ENCODE measurements at regions of chr10 and their contacts with region 1.

Region 1: GRCh38 chr10:68208424-68209042 is 23.4 kb downstream of the ATOH7 start:
- H3K4me3 ChIP-seq: no peak overlapping the region
- H3K27ac ChIP-seq: no peak overlapping the region
- H3K4me1 ChIP-seq: no peaks in the 10 kb centered on the region
- CTCF ChIP-seq: peak; percentile 95

Region 2: DNA sequence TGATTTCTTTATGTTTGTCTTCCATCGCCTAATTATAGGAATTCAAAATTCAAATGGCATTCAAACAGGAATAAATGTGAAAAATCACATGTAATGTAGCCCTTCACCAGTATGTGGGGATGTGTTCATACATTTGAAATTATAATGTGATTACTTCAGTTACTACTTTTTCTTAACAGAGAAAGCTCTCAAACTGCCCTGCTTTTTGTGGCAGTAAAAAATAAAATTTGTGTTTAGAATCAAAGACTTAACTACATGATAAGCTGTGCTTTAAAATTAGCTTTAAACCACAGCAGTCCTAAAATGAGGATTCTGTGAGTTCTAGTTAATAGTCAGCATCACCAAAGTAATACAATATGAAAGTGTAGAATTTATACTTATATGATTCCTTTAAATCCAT is 125.7 kb before region 1 on chr10:
- CTCF ChIA-PET with region 1: interaction called, 12 read pairs
- POLR2A ChIA-PET with region 1: no interaction called
- H3K4me3 ChIP-seq: no peak overlapping the region
- H3K27ac ChIP-seq: no peak overlapping the region
- H3K4me1 ChIP-seq: no peaks in the 10 kb centered on the region
- CTCF ChIP-seq: no peak

Region 3: GRCh38 chr10:68105820-68106219 is 102.7 kb before region 1 on chr10:
- CTCF ChIA-PET with region 1: no interaction called
- POLR2A ChIA-PET with region 1: no interaction called
- H3K4me3 ChIP-seq: no peak overlapping the region
- H3K27ac ChIP-seq: no peak overlapping the region
- H3K4me1 ChIP-seq: peaks cover 18% of the 10 kb centered on the region
- CTCF ChIP-seq: no peak

Region 4: DNA sequence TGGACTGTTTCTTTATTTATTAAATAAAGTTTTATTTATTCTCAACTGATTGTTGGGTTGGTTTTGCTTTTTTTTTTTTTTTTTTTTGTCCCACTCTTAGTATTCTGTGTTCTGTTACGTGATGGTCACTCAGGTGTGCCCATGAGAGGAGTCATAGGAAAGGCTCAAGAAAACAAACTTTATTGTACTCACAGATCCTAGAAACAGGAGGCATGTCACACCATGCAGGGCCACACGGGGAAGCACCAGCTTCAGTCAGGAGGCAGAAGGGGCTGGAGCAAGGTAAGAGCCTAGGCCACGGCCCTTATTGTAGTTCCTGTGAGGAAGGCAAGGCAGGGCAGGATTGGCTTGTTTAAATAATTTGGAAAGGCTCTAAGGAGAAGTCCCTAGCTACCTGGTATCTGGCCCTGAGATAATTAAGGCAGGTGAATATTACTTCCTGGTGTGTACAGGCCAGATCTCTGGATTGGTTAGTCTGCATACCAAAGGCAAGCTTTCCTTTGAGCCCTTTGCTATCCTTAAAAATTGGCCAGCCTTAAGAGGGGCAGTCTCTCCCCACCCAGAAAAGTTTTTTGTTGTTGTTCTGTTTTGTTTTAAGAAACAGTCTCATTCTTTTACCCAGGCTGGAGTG is 15.1 kb after region 1 on chr10:
- CTCF ChIA-PET with region 1: interaction called, 30 read pairs
- POLR2A ChIA-PET with region 1: no interaction called
- H3K4me3 ChIP-seq: no peak overlapping the region
- H3K27ac ChIP-seq: no peak overlapping the region
- H3K4me1 ChIP-seq: no peaks in the 10 kb centered on the region
- CTCF ChIP-seq: no peak

Region 5: DNA sequence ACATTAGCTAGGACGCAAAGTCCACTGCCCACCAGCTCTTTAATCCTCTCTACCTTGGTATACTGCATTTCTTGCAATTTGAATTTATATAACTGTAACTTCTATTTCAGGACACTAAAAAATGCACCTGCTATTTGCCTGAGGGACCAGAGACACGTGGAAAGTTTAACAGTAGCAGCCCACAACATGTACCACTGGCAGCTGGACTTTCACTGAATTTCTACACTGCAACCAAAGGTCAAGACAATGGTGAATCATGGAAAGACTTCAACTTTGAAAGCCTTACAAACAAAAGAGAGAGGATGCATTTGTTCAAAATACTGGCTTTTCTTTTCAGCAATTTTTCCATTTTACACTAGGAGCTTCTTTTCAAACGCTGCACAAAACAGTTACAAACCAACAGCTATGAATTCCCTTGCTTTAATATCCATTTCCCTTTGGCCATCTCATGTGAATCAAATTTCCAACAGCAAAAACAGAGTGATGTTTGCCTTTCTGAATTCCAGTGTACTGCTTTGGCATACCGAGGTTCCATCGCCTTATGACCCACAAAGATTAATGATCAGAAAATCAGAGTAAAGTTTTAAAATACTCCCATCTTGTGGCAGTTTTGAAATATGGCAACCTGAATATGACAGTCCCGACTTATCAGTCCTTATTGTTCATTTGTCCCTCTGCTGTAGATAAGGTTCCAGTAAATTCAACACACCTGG is 93.4 kb after region 1 on chr10:
- CTCF ChIA-PET with region 1: interaction called, 73 read pairs
- POLR2A ChIA-PET with region 1: no interaction called
- H3K4me3 ChIP-seq: no peak overlapping the region
- H3K27ac ChIP-seq: no peak overlapping the region
- H3K4me1 ChIP-seq: no peaks in the 10 kb centered on the region
- CTCF ChIP-seq: no peak

Region 6: DNA sequence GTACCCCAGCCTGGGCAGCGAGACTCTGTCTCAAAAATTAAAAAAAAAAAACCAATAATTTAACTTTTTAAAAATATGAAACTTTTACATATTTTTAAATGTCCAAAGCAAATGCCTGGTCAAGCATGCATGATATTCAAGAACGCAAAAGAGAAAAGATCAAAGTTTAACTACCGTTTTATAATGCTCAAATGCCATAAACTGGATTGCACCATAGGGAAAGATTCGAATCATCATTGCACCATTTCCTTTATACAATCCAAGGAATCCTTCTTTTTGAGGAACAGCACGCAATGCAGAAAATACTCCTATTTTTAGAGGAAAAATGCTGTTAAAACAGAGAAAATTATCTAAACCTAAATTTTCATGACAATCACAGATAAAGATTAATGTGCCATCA is 297.9 kb after region 1 on chr10:
- CTCF ChIA-PET with region 1: no interaction called
- POLR2A ChIA-PET with region 1: no interaction called
- H3K4me3 ChIP-seq: no peak overlapping the region
- H3K27ac ChIP-seq: no peak overlapping the region
- H3K4me1 ChIP-seq: no peaks in the 10 kb centered on the region
- CTCF ChIP-seq: no peak

Region 7: DNA sequence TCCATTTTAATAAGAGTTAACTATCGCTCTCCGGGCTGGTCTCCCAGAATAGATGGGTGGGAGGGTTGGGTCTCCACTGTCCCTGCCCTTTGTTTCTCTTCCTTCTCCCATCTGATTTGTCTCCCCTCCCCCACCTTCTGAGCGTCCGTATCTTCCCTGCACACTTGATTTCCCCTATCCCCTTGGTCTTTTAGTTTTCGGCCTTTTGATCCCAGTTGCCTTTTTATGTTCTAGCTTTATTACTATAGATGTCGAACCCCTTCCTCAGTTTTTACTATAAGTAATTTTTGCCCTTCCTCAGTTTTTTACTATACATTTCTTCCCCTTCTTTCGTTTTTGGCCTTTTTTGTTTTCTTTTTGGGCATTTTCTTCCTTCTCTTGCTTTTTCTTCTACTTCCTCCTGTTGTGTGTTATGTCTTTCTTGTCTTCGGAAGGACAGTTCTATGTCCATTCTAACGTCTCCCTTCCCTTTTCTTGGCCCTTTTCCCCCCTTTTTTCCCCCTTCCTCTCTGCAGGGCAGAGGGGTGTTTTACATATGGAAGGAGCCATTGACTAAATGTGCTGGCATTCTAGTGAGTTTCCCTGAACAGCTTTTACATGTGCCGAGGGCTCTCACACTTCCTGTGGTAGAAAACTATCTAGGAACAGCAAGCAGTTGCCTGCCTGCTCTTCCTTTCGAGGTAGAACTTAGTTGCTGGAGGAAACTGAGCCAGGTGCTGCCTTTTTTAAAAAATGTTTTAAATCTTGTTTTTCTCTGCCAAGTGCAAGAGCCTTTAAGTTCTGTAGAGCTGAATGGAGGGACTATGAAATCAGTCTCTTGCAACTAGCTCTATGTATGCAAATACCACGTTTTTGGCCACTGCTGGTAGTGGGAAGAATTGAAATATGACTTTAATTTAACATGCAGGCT is 354.4 kb after region 1 on chr10:
- CTCF ChIA-PET with region 1: no interaction called
- POLR2A ChIA-PET with region 1: no interaction called
- H3K4me3 ChIP-seq: peak overlapping the region; percentile 85
- H3K27ac ChIP-seq: peak overlapping the region; percentile 35; the same call in 1 of the 2 replicates
- H3K4me1 ChIP-seq: peaks cover 5% of the 10 kb centered on the region
- CTCF ChIP-seq: no peak